ENCODE measurements at regions of chr16 and their contacts with region 1.

Region 1: DNA sequence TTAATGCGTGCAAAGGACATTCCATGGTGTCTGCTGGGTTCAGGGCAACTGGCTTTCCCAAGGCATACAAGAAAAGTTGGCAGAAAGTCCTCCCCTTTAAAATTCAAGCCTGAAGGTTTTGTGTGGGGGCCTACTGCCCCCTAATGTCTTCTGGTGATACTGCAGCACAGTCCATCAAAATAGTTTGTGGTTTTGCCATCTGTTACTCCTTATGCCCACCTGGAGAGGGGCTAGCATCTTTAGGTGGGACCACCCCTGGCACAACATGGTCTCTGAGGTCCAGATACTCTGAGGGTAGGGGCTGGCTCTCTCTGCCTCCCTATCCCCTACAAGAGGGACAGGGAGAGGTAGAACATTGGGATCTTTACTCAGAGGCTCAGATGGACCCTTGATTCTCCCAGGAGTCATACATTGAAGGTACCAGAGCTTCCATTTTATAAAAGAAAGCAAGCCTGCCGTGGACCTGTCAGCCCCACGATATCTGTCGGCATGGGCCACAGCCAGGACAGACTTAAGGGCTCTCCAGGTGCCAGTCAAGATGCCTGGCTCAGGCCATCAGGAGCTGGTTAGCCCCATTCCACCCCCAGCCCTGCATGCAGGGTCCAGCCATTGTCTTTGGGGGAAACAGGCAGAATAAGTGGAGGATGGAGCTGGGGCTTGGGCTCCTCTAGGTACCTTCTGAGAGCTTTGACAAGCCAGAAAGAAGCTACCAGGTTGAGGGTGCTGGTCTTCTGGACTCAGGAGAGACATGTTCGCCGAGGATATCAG is 6.3 kb downstream of the ESRP2 start:
- DNase-seq: peak in 4 of 10 donors; percentile 39 to 51 (median 44)

Region 2: GRCh38 chr16:67993189-67994039 is 236.2 kb before region 1 on chr16:
- intact Hi-C with region 1: loop called (anchors 10 kb)
- DNase-seq: peak; percentile 20 to 94 (median 64)

Region 3: GRCh38 chr16:68093816-68094613 is 135.6 kb before region 1 on chr16:
- intact Hi-C with region 1: loop called (anchors 1 kb)
- DNase-seq: no peak

Region 4: DNA sequence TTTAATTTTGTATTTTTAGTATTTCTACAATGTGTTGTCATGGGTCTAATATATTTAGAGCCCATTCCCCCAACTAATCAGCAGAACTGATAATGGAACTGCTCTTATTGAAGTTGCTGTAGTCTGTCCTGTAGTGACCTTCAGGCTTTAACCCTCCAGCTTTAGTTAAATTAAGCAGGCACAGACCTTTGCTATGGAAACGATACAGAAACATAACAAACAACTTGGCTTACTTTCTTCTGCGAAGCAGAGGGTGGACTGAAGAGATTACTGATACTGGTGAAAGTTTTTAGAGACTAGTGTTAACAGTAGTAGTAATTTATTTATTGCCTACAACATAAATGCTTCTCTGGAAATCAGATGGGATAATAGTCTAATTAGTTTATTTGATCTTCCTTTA is 83.0 kb before region 1 on chr16:
- intact Hi-C with region 1: no loop called
- DNase-seq: no peak

Region 5: DNA sequence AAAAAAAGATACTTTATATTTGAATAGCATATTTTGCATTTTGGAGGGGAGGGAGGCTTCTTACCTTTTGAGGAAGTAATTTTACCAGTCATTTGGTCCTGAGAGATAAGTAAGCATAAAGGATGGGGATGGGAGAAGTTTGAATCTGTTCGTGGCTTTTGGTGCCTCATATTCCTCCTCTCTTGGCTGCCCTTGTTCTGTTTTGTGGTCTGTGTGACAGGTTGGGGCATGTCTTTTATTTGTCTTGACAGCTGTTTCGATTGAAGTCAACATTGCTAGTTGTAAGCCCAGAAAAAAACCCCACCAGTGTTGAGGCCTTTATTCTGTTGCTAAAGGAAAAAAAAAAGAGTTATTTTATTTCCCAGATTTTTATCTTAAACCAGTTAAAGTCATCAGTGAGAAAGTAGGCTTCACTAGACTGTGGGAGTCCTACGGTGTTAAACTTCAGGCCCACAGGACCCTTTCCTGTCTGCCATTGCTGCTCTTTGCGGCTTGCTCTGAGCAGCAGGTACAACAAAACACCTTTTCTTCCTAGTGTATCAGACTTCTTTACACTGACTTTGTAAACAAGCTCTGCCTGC is 46.1 kb after region 1 on chr16:
- intact Hi-C with region 1: no loop called
- DNase-seq: peak in 1 of 10 donors; percentile 6